Left cardiac atrium (tissue), 4 donors: ENCODE measurements at regions of chr14 and their contacts with region 1.

Region 1: DNA sequence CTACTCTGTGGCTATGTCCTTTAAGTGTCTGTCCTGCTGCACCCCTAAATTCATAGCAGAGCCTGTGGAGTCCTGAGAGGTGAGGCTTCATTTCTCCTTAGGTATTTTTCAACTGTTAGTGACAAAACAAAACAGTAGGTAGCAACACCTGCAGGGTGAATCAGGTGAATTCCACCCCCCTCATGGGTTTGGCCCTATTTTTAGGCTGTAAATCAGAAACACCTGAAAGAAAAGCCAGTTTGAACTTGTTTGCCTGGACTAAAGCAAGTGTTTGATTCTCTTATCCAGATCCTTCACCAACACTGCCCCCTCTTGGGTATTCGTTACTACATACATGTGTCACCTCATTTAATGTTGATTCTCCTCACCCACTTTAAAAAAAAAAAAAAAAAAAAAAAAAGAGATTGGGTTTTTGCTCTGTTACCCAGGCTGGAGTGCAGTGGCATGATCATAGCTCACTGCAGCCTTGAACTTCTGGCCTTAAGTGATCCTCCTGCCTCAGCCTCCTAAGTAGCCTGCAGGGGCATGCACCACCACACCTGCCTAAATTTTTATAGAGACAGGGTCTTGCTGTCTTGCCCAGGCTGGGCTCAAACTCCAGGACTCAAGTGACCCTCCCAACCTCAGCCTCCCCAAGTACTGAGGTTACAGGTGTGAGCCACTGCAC is 10.3 kb downstream of the TBPL2 start:
- DNase-seq: no peak
- ATAC-seq: peak; percentile 64 to 76

Region 2: DNA sequence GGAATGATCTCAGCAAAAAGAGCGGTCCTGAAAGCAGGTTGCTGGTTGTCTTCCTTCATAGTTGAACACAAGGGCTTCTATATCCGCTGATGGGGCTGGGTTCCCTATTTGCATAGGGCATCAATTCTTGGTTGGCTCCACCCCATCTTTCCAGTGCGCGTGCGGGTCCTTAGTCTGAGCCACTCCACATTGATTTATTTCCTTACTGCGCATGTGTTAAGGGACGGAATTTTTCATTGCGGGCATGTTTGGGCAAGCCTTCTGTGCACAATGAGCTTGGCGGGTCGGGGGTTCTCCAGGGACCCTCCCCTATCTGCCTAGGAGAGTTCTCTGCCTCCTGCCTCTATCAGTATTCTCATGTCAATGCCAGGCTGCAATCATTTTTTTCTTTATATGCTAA is 217.5 kb before region 1 on chr14:
- intact Hi-C with region 1: loop called in 1 of 2 experiments (anchors 10 kb)
- DNase-seq: no peak
- ATAC-seq: no peak

Region 3: GRCh38 chr14:55245657-55246268 is 184.4 kb before region 1 on chr14:
- intact Hi-C with region 1: loop called in 1 of 2 experiments (anchors 10 kb)
- DNase-seq: no peak
- ATAC-seq: peak in 1 of 2 donors; percentile 48